Breast epithelium (tissue), 4 donors: ENCODE measurements at regions of chr18 and their contacts with region 1.

Region 1: GRCh38 chr18:33916200-33916599 is 308.5 kb downstream of the NOL4 start:
- DNase-seq: no peak
- H3K4me3 ChIP-seq: no peak overlapping the region
- H3K27ac ChIP-seq: no peak overlapping the region
- H3K4me1 ChIP-seq: no peaks in the 10 kb centered on the region
- H3K27me3 ChIP-seq: no peaks in the 10 kb centered on the region
- CTCF ChIP-seq: no peak
- POLR2A ChIP-seq: no peak

Region 2: GRCh38 chr18:33711514-33711913 is 204.7 kb before region 1 on chr18:
- intact Hi-C with region 1: no loop called
- DNase-seq: no peak
- H3K4me3 ChIP-seq: no peak overlapping the region
- H3K27ac ChIP-seq: no peak overlapping the region
- H3K4me1 ChIP-seq: no peaks in the 10 kb centered on the region
- H3K27me3 ChIP-seq: no peaks in the 10 kb centered on the region
- CTCF ChIP-seq: no peak
- POLR2A ChIP-seq: no peak

Region 3: GRCh38 chr18:33854086-33854826 is 61.9 kb before region 1 on chr18:
- intact Hi-C with region 1: loop called (anchors 2 kb)
- DNase-seq: no peak
- H3K4me3 ChIP-seq: no peak overlapping the region
- H3K27ac ChIP-seq: no peak overlapping the region
- H3K4me1 ChIP-seq: no peaks in the 10 kb centered on the region
- H3K27me3 ChIP-seq: no peaks in the 10 kb centered on the region
- CTCF ChIP-seq: no peak
- POLR2A ChIP-seq: no peak